ENCODE measurements at regions of chr20 and their contacts with region 1.

Region 1: GRCh38 chr20:2261105-2261504 is 34.7 kb upstream of the TGM3 start:
- DNase-seq: no peak
- H3K4me3 ChIP-seq: no peak overlapping the region
- H3K27ac ChIP-seq: no peak overlapping the region
- H3K4me1 ChIP-seq: no peaks in the 10 kb centered on the region
- H3K27me3 ChIP-seq: no peaks in the 10 kb centered on the region
- CTCF ChIP-seq: no peak
- EP300 ChIP-seq: no peak
- POLR2A ChIP-seq: no peak

Region 2: DNA sequence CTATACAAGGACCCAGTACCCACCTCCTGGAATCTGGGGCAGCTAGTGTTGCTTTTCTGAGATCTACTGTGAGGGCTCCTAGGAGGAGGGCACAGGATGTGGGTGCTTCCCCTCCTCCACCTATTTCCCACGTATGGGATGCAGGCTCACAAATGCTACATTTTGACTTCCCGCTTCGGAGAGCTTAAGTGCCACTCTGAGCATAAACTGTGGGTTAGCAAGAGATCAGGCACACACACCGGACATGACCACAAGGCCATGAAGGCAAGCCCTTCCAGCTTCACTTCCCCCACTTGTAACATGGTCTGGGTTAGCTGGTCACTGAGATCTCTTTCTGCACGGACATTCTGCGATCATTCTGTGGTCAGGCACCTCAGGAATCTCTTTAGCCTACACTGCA is 19.0 kb after region 1 on chr20:
- intact Hi-C with region 1: loop called in 1 of 4 experiments (anchors 2 kb)
- DNase-seq: no peak
- H3K4me3 ChIP-seq: no peak overlapping the region
- H3K27ac ChIP-seq: no peak overlapping the region
- H3K4me1 ChIP-seq: no peaks in the 10 kb centered on the region
- H3K27me3 ChIP-seq: no peaks in the 10 kb centered on the region
- CTCF ChIP-seq: no peak
- EP300 ChIP-seq: no peak
- POLR2A ChIP-seq: no peak

Measured in ovary (tissue), 10 donors.